Lower leg skin (tissue), 4 donors: ENCODE measurements at regions of chr3 and their contacts with region 1.

Region 1: DNA sequence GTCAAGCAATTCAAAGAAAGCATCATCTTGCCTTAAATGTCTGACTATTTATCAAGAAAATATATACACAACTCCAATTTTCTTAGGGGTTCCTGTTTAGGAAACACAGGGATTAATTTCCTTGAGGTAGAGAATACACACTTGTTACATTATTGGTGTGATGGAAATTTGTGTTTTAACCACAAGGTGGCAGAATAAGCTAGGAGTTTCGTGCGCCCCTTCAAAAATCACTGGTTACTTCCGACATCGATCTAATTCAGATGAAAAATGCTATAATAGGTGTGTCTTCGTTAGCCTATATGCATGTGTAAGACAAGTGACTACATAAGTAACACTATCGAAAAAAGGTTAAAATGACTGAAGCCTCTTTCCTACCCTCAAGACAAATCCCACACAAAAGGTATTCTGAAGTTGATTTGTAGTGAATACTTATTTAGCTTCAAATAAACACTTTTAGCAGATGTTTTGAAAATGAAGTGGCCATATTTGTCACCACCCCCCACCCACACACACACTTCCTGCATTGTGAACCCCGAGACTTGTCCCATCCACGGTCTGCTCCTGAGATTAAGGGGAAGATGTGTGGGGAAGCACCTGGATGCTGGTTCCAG is 246.5 kb downstream of the ROBO1 start:
- DNase-seq: no peak
- H3K4me3 ChIP-seq: no peak overlapping the region
- CTCF ChIP-seq: no peak
- POLR2A ChIP-seq: no peak

Region 2: DNA sequence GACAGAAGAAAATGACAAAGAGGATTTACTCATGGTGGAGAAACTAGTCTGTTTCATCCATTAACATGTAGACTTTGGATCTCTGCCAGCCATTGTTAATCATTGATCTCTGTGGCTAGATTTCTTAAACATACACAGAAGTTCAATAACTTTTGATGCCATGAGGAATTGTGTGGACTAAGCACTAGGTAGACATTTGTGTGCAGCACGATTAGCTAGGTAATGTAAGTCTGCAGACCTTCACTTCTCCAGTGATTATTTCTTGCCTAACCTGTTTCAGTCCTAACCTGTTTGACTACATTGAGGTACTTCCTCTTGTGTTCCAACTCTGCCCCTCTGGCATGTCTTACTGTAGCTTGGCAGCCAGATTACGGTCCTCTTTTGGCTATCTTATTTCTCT is 1174.9 kb after region 1 on chr3:
- intact Hi-C with region 1: loop called (anchors 10 kb)
- DNase-seq: no peak
- H3K4me3 ChIP-seq: no peak overlapping the region
- CTCF ChIP-seq: no peak
- POLR2A ChIP-seq: no peak

Region 3: GRCh38 chr3:81154611-81155143 is 1633.3 kb after region 1 on chr3:
- intact Hi-C with region 1: no loop called
- DNase-seq: no peak
- H3K4me3 ChIP-seq: no peak overlapping the region
- CTCF ChIP-seq: no peak
- POLR2A ChIP-seq: no peak